ENCODE measurements at regions of chr18 and their contacts with region 1.

Region 1: DNA sequence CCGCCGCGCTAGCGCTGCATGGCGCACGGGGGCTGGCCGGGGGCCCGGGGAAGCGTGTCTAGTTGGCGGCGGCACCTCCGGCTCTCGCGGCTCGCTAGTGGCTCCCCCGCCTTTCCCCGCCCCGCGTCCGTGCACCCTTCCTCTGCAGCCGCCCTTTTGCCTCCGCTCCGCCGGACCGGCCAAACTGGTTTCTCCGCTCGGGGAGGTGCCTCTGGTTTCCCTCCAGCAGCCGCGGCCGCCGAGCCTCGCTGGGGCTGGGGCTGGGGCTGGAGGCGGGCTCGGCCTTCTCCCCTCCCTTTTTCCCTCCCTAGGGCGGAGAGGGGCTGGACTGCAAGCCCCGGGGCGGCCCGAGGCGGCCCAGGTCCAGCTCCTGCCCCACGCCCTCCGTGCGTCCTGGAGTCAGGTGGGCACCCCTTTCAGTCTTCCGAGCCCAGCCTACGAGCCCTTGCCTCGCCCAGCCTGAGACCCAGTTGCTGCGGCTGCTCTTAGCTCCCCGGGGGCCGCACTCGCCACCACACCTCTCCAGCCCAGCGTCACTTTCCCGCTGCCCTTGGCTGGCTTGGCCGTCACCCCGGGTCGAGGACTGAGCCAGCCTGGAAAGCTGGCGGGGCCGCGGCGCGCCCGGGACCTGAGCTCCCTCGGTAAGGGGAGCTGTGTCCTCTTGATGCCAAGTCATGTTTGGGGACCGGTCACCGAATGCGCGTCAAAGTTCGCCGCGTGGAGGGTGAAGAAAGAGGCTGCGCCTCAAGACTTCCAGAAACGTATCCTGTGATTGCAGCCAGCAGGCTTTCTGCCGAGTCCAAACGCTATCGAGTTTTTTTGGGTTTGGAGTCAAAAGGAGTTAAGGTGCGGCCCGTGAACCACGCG is at the start of gene ATP8B1:
- DNase-seq: peak; percentile 83 to 93 (median 93)
- ATAC-seq: peak; percentile 93
- H3K4me3 ChIP-seq: peak within 1 kb of the TSS; percentile 82
- H3K27ac ChIP-seq: peak within 1 kb of the TSS; percentile 18
- H3K4me1 ChIP-seq: peaks cover 3% of the 10 kb centered on the region
- H3K27me3 ChIP-seq: no peaks in the 10 kb centered on the region
- total RNA-seq, gene ATP8B1: 7.5 to 11.5 (median 9.4) TPM

Region 2: DNA sequence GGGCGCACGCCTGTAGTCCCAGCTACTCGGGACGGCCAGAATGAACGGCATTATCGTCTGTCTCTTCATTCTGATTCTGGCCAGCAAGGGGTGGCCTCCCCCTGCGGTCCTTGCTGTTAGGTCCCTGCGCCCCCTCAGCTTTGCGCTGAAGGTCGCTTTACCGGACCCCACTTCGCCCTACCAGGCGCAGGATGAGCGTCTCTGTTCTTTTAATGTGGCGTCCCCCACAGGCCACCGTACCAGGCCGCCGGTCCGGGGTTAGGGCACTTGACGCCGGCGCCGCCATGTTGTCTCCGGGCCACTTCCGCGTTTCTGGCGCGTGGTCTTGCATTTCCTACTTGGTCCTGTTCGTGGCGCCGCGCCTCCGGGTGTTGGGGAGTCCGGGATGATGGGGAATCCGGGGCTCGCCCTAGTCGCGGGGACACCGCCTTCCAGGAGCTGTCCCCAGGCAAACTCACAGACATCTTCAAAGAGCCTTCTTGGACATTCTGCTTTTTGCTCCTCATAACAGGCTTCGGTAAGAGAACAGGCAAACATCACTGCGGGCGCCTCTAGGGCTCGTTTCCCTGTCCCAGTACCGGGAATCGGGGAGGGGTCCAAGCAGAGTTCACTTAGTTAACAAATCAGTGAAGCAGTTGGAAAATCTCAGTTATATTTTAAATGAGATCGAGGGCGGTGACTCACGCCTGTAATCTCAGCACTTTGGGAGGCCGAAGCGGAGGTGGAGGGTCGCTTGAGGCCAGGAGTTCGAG is 173.2 kb before region 1 on chr18:
- intact Hi-C with region 1: loop called in 1 of 4 experiments (anchors 10 kb)
- DNase-seq: peak; percentile 98 to 99 (median 99)
- ATAC-seq: peak; percentile 96 to 97
- H3K4me3 ChIP-seq: peak overlapping the region; percentile 66
- H3K27ac ChIP-seq: peak overlapping the region; percentile 54
- H3K4me1 ChIP-seq: no peaks in the 10 kb centered on the region
- H3K27me3 ChIP-seq: no peaks in the 10 kb centered on the region

Region 3: GRCh38 chr18:57715681-57716080 is 87.7 kb before region 1 on chr18:
- intact Hi-C with region 1: loop called in 1 of 4 experiments (anchors 10 kb)
- DNase-seq: no peak
- ATAC-seq: no peak
- H3K4me3 ChIP-seq: no peak overlapping the region
- H3K27ac ChIP-seq: no peak overlapping the region
- H3K4me1 ChIP-seq: peaks cover 4% of the 10 kb centered on the region
- H3K27me3 ChIP-seq: no peaks in the 10 kb centered on the region

Region 4: GRCh38 chr18:57737400-57738060 is 65.8 kb before region 1 on chr18:
- intact Hi-C with region 1: no loop called
- DNase-seq: peak; percentile 73 to 81 (median 76)
- ATAC-seq: peak; percentile 91 to 92
- H3K4me3 ChIP-seq: no peak overlapping the region
- H3K27ac ChIP-seq: no peak overlapping the region
- H3K4me1 ChIP-seq: no peaks in the 10 kb centered on the region
- H3K27me3 ChIP-seq: no peaks in the 10 kb centered on the region

Measured in right cardiac atrium (tissue), 5 donors.